ENCODE measurements at regions of chr1 and their contacts with region 1.

Region 1: DNA sequence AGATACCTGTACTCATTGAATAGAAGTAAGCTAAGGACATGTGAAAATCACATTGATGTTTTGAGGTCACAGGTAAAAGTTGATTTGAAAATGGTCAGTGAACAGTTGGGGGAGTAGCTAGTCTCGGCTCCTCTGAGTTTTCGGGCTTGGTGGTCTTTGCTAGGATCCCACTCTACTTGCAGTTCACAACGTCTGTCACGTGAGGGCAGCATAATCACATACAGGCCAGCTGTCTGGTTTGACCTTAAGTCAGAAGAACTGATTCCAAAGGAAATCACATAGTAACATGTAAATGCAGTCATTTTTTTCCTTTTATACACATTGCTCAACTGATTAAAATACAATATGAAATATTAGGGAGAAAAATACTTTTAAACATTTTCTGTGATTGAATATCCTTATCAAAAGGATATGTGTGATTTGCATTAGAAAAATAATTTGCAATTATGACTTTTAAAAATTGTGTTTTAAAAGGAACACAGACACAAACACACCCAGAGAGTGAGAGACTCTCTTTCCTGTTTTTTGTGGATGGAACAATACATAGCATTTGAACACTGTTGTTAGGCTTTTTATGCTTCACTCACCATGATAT is 21.8 kb upstream of the PDC start:
- DNase-seq: peak; percentile 43
- H3K4me3 ChIP-seq: no peak overlapping the region
- H3K27ac ChIP-seq: no peak overlapping the region
- H3K4me1 ChIP-seq: no peaks in the 10 kb centered on the region
- H3K27me3 ChIP-seq: no peaks in the 10 kb centered on the region
- CTCF ChIP-seq: peak; percentile 88

Region 2: DNA sequence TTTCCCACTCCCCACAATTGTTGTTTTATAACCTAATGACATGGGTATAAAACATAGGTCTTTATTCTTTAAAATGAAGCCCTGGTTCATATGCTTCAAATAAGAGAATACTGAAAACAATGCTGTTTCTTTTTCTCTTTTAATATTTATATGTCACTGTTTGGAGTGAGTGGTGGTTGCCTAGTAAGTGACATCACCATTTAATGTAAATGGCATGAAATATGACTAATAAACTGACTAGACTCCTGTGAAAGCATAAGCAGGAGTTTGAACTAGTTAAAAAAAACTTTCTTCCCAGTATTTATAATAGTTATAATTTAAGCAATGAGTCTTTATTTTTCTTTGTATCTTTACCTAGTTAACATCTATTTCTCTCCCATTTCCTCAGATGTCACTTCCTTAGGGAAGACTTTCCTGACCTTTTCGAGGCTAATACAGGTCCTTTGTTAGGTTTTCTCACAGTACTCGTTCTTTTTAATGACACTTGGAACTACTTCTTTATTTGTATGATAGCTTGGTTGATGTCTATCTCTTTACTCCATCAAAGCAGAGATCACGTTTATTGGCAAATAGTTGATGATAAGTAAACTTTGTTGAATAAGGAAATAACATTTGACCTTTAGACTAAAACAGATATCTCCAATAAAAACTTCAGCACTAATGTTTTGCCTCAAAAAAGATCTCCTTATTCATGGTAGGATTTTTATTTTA is 83.5 kb after region 1 on chr1:
- intact Hi-C with region 1: no loop called
- DNase-seq: no peak
- H3K4me3 ChIP-seq: no peak overlapping the region
- H3K27ac ChIP-seq: no peak overlapping the region
- H3K4me1 ChIP-seq: no peaks in the 10 kb centered on the region
- H3K27me3 ChIP-seq: no peaks in the 10 kb centered on the region
- CTCF ChIP-seq: no peak

Region 3: GRCh38 chr1:186618401-186619170 is 135.8 kb after region 1 on chr1:
- intact Hi-C with region 1: no loop called
- DNase-seq: peak; percentile 58
- H3K4me3 ChIP-seq: peak overlapping the region; percentile 22
- H3K27ac ChIP-seq: no peak overlapping the region
- H3K4me1 ChIP-seq: no peaks in the 10 kb centered on the region
- H3K27me3 ChIP-seq: no peaks in the 10 kb centered on the region
- CTCF ChIP-seq: no peak

Region 4: GRCh38 chr1:186680245-186681061 is 197.7 kb after region 1 on chr1 and contains the start of gene PTGS2:
- intact Hi-C with region 1: loop called (anchors 10 kb)
- DNase-seq: peak; percentile 80
- H3K4me3 ChIP-seq: peak within 1 kb of the TSS; percentile 51
- H3K27ac ChIP-seq: peak within 1 kb of the TSS; percentile 75
- H3K4me1 ChIP-seq: no peaks in the 10 kb centered on the region
- H3K27me3 ChIP-seq: no peaks in the 10 kb centered on the region
- CTCF ChIP-seq: peak; percentile 31
- total RNA-seq, gene PTGS2: 0.57 to 14.9 TPM

Measured in colonic mucosa (tissue), 4 donors.